ENCODE measurements at regions of chr11 and their contacts with region 1.

Region 1: GRCh38 chr11:55942785-55943392 is 6.7 kb upstream of the OR5I1 start:
- DNase-seq: no peak
- ATAC-seq: no peak
- H3K4me3 ChIP-seq: no peak overlapping the region
- H3K4me3 Mint-ChIP-seq: no peak overlapping the region
- H3K27ac ChIP-seq: no peak overlapping the region
- H3K27ac Mint-ChIP-seq: no peak overlapping the region
- H3K4me1 ChIP-seq: no peaks in the 10 kb centered on the region
- H3K4me1 Mint-ChIP-seq: no peaks in the 10 kb centered on the region
- H3K27me3 ChIP-seq: no peaks in the 10 kb centered on the region
- H3K27me3 Mint-ChIP-seq: no peaks in the 10 kb centered on the region

Region 2: DNA sequence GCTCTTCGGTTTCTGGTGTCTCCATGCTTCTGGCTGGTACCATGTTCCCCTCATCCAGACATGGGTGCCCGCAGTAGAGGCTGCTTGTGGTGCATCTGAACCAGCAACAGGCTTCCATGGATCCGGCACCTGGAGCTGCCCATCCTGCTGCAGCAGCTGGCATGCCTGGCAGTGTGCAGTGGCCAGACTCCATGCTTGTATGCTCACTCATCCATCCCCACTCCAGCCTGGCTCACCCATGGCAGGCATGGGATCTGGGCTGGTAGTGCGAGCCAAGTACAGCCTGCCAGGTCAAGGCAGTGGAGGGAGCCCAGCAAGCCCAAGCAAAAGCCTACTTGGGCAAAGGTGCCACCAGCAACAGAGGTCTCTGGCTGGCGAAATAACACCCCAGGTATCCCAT is 22.4 kb before region 1 on chr11:
- CTCF ChIA-PET with region 1: no interaction called
- POLR2A ChIA-PET with region 1: no interaction called
- intact Hi-C with region 1: no loop called
- DNase-seq: no peak
- ATAC-seq: no peak
- H3K4me3 ChIP-seq: no peak overlapping the region
- H3K4me3 Mint-ChIP-seq: no peak overlapping the region
- H3K27ac ChIP-seq: no peak overlapping the region
- H3K27ac Mint-ChIP-seq: no peak overlapping the region
- H3K4me1 ChIP-seq: no peaks in the 10 kb centered on the region
- H3K4me1 Mint-ChIP-seq: no peaks in the 10 kb centered on the region
- H3K27me3 ChIP-seq: no peaks in the 10 kb centered on the region
- H3K27me3 Mint-ChIP-seq: no peaks in the 10 kb centered on the region

Region 3: GRCh38 chr11:56783448-56784041 is 840.7 kb after region 1 on chr11:
- CTCF ChIA-PET with region 1: no interaction called
- POLR2A ChIA-PET with region 1: no interaction called
- intact Hi-C with region 1: loop called in 1 of 2 experiments (anchors 1 kb)
- DNase-seq: peak in 2 of 9 donors; percentile 4 to 5
- ATAC-seq: no peak
- H3K4me3 ChIP-seq: no peak overlapping the region
- H3K4me3 Mint-ChIP-seq: no peak overlapping the region
- H3K27ac ChIP-seq: no peak overlapping the region
- H3K27ac Mint-ChIP-seq: no peak overlapping the region
- H3K4me1 ChIP-seq: no peaks in the 10 kb centered on the region
- H3K4me1 Mint-ChIP-seq: no peaks in the 10 kb centered on the region
- H3K27me3 ChIP-seq: no peaks in the 10 kb centered on the region
- H3K27me3 Mint-ChIP-seq: no peaks in the 10 kb centered on the region